ENCODE measurements at regions of chr11 and their contacts with region 1.

Region 1: DNA sequence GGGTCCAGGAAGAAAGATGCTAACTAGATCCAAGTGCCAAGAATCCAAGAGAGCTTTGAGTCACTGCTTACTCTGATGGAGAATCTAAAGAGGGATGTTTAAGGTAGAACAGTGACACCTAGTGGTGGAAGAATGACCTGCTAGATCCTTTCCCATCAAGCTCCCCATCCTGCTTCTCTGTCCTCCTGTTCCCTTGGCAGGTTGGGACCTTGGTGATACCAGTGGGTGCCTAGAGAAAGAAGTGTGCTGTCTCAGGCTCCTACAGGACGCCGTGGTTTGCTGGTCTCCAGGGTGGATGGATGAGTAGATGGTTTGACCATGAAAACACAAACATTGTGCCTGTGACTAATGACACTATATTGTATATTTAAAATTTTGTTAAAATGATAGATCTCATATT is 383.7 kb downstream of the TMEM135 start:
- DNase-seq: peak in 3 of 9 experiments; percentile 23 to 69 (median 59)
- ATAC-seq: no peak
- H3K4me3 ChIP-seq: no peak overlapping the region
- H3K4me3 Mint-ChIP-seq: no peak overlapping the region
- H3K27ac ChIP-seq: no peak overlapping the region
- H3K27ac Mint-ChIP-seq: no peak overlapping the region
- H3K4me1 ChIP-seq: no peaks in the 10 kb centered on the region
- H3K4me1 Mint-ChIP-seq: no peaks in the 10 kb centered on the region
- H3K27me3 ChIP-seq: no peaks in the 10 kb centered on the region
- H3K27me3 Mint-ChIP-seq: peaks cover 2% of the 10 kb centered on the region
- CTCF ChIP-seq: peak; percentile 65

Region 2: GRCh38 chr11:86869966-86870570 is 551.4 kb before region 1 on chr11:
- CTCF ChIA-PET with region 1: no interaction called
- POLR2A ChIA-PET with region 1: no interaction called
- intact Hi-C with region 1: loop called in 1 of 2 experiments (anchors 1 kb)
- DNase-seq: peak in 7 of 9 experiments; percentile 17 to 47 (median 23)
- ATAC-seq: no peak
- H3K4me3 ChIP-seq: no peak overlapping the region
- H3K4me3 Mint-ChIP-seq: no peak overlapping the region
- H3K27ac ChIP-seq: no peak overlapping the region
- H3K27ac Mint-ChIP-seq: no peak overlapping the region
- H3K4me1 ChIP-seq: no peaks in the 10 kb centered on the region
- H3K4me1 Mint-ChIP-seq: no peaks in the 10 kb centered on the region
- H3K27me3 ChIP-seq: no peaks in the 10 kb centered on the region
- H3K27me3 Mint-ChIP-seq: peaks cover 2% of the 10 kb centered on the region
- CTCF ChIP-seq: peak; percentile 67

Region 3: DNA sequence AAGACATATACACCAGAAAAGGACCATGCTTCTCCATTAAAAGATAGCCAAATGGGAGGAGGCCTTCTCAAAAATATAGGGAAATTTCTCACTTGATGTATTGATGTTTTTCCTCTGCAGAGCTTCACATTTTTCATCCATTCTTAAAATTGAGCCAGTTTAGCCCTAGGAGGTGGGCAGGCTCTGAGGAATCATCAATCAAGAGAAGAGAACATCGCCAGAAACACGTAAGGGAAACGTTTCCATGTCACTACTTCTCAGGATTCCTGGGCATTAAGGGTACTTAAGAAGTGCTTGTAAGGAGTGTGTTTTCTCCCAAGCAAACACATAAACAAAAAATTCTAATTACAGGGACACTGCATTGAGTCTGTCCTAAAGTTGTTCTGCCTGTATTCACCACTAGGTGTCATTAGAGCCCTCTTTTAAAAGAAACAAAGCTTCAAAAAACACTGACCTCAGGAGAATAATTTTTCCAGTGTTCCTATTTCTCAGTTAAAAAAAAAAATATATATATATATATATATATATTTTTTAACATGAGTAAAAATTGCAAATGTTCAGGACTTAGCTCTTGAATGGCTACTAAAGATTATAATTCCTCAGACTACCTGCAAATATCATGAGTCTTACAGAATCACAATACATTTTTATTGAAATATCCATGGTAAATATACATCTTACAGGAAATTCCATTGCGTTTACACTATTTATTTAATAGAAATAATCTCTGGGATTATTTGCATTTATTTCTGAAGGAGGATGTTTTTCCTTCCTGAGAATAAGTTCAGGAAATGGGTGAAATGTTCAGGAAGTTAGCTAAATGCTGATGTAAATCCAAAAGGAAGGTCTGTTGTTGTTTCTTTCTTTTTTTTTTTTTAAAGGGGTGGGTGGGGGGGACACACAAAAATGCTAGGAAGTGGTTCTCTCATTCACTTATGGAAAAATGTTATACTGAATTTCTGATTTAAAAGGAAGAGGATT is 482.2 kb before region 1 on chr11:
- CTCF ChIA-PET with region 1: interaction called, 13 read pairs
- POLR2A ChIA-PET with region 1: no interaction called
- intact Hi-C with region 1: loop called (anchors 1 kb)
- DNase-seq: peak in 2 of 9 experiments; percentile 53 to 60
- ATAC-seq: peak; percentile 52
- H3K4me3 ChIP-seq: no peak overlapping the region
- H3K4me3 Mint-ChIP-seq: no peak overlapping the region
- H3K27ac ChIP-seq: no peak overlapping the region
- H3K27ac Mint-ChIP-seq: no peak overlapping the region
- H3K4me1 ChIP-seq: no peaks in the 10 kb centered on the region
- H3K4me1 Mint-ChIP-seq: no peaks in the 10 kb centered on the region
- H3K27me3 ChIP-seq: no peaks in the 10 kb centered on the region
- H3K27me3 Mint-ChIP-seq: peaks cover 6% of the 10 kb centered on the region
- CTCF ChIP-seq: peak; percentile 72

Region 4: DNA sequence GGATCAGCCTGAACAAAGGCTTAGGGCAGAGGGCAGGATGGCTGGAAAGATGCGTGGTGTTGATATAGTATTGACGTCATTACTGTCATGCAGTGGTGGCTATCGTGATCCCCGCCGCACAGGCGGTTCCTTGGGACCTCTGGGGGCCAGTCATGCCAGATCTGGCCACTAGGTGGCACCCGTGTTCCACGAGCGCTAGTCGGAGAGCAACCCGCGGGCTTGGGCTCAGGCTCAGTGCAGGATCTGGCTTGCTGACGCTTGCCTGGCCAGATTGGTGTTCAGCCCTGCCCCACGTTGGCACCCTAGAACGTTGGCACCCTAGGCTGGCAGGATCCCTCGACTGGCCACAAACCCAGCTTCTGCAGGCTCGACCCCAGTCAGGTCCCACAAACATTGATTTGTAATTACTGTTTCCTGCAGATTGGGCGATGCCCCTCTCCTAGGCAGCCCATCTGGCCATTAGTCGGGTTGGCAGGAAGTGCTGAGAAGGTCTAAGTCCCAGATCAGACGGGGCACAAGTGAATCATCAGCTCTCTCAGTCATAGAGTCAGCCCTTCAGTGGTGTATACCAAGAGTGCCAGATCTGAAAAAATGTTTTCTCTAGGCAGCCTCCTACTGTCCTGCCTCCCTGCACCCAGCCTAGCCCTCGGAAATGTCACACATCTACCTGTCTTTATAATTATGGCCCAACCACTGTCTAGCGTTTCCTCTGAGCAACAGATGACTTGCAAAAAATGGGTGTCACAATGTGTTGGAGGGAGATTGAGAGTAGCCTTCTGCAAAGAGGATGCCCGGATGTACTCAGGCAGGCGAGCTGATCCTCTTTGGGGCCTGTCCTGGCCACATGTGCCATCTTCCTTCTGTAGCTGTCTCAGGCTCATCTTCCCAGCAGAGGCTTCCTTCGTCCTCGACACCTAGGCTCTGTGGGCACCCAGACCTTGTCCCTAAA is 68.4 kb before region 1 on chr11:
- CTCF ChIA-PET with region 1: interaction called, 79 read pairs
- POLR2A ChIA-PET with region 1: no interaction called
- intact Hi-C with region 1: loop called (anchors 1 kb)
- DNase-seq: peak; percentile 66 to 90 (median 80)
- ATAC-seq: peak; percentile 94
- H3K4me3 ChIP-seq: no peak overlapping the region
- H3K4me3 Mint-ChIP-seq: no peak overlapping the region
- H3K27ac ChIP-seq: no peak overlapping the region
- H3K27ac Mint-ChIP-seq: no peak overlapping the region
- H3K4me1 ChIP-seq: peaks cover 5% of the 10 kb centered on the region
- H3K4me1 Mint-ChIP-seq: peaks cover 10% of the 10 kb centered on the region
- H3K27me3 ChIP-seq: no peaks in the 10 kb centered on the region
- H3K27me3 Mint-ChIP-seq: peaks cover 16% of the 10 kb centered on the region
- CTCF ChIP-seq: peak; percentile 97

Region 5: DNA sequence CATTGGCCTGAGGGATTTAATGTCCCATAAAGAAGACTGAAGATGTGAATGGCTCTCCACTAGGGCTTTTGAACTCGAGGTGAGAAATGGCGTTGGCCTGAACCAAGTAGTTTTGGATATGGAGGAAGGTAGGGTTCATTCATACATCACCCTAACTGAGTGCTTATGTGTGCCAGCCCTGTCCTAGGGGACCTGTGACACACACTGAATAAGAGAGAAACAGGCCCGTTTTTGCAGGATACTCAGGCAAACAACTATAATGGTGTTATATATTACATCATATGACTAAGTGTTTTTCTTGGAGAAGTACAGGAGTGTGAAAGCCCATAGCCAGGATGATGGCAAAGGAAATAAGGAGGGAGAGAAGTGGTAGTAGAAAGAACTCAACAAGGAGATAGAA is 15.6 kb before region 1 on chr11:
- CTCF ChIA-PET with region 1: interaction called, 17 read pairs
- POLR2A ChIA-PET with region 1: no interaction called
- intact Hi-C with region 1: no loop called
- DNase-seq: no peak
- ATAC-seq: no peak
- H3K4me3 ChIP-seq: no peak overlapping the region
- H3K4me3 Mint-ChIP-seq: no peak overlapping the region
- H3K27ac ChIP-seq: no peak overlapping the region
- H3K27ac Mint-ChIP-seq: no peak overlapping the region
- H3K4me1 ChIP-seq: no peaks in the 10 kb centered on the region
- H3K4me1 Mint-ChIP-seq: no peaks in the 10 kb centered on the region
- H3K27me3 ChIP-seq: peaks cover 0 to 2% of the 10 kb centered on the region in 2 experiments
- H3K27me3 Mint-ChIP-seq: peaks cover 5% of the 10 kb centered on the region
- CTCF ChIP-seq: no peak

Region 6: GRCh38 chr11:87432022-87432421 is 10.6 kb after region 1 on chr11:
- CTCF ChIA-PET with region 1: interaction called, 10 read pairs
- POLR2A ChIA-PET with region 1: no interaction called
- intact Hi-C with region 1: no loop called
- DNase-seq: no peak
- ATAC-seq: no peak
- H3K4me3 ChIP-seq: no peak overlapping the region
- H3K4me3 Mint-ChIP-seq: no peak overlapping the region
- H3K27ac ChIP-seq: no peak overlapping the region
- H3K27ac Mint-ChIP-seq: no peak overlapping the region
- H3K4me1 ChIP-seq: no peaks in the 10 kb centered on the region
- H3K4me1 Mint-ChIP-seq: no peaks in the 10 kb centered on the region
- H3K27me3 ChIP-seq: no peaks in the 10 kb centered on the region
- H3K27me3 Mint-ChIP-seq: no peaks in the 10 kb centered on the region
- CTCF ChIP-seq: no peak

Region 7: GRCh38 chr11:88770475-88771079 is 1349.2 kb after region 1 on chr11:
- CTCF ChIA-PET with region 1: no interaction called
- POLR2A ChIA-PET with region 1: no interaction called
- intact Hi-C with region 1: no loop called
- DNase-seq: no peak
- ATAC-seq: no peak
- H3K4me3 ChIP-seq: no peak overlapping the region
- H3K4me3 Mint-ChIP-seq: no peak overlapping the region
- H3K27ac ChIP-seq: no peak overlapping the region
- H3K27ac Mint-ChIP-seq: no peak overlapping the region
- H3K4me1 ChIP-seq: no peaks in the 10 kb centered on the region
- H3K4me1 Mint-ChIP-seq: no peaks in the 10 kb centered on the region
- H3K27me3 ChIP-seq: no peaks in the 10 kb centered on the region
- H3K27me3 Mint-ChIP-seq: no peaks in the 10 kb centered on the region
- CTCF ChIP-seq: no peak

Measured in CD8-positive, alpha-beta T cell (primary cell).